ENCODE measurements at regions of chr16 and their contacts with region 1.

Region 1: GRCh38 chr16:18789850-18790724 is at the start of gene RPS15A:
- DNase-seq: peak; percentile 98
- H3K4me3 ChIP-seq: peak within 1 kb of the TSS; percentile 88
- H3K27ac ChIP-seq: peak within 1 kb of the TSS; percentile 94
- H3K4me1 ChIP-seq: peaks cover 30% of the 10 kb centered on the region
- H3K27me3 ChIP-seq: no peaks in the 10 kb centered on the region
- CTCF ChIP-seq: no peak
- total RNA-seq, gene RPS15A: 1,282 and 1,307 TPM in 2 replicates

Region 2: DNA sequence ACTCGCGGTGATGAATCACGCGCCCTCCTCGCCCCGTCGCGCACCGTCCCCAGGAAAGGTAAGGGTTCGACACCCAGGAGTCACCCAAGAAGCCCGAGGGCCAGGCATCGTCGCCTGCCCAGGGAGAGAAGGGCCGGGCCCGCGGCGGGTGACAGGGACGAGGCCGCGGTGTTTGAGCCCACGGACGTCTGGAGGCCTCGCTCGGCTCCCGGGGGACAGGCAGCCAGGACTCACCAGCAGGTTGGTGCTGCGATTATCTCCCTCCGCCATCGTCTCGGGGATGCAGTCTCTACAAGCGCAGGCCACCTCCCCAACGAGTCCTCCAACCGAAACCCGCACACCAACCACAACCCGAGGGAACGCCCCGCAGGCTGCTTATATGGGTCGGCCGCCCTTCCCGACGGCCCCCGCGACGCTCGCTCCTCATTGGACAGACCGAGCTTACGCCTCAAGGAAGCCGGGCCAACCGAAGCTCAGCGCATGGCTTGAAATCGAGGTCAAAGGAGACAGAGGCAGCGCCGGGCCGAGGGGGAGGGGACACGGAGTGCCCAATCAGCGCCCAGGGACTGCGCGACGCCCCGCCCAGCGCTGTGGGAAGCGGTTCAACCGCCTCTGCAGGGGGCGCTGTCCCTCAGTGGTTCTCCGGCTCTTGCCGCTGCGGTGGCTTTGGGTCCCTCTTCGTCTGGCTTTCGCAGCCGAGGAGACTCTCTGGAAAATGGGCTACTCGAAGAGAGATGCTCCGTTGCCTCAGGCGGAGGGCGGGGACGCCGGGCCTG is 11.3 kb after region 1 on chr16 and contains the start of gene ARL6IP1:
- CTCF ChIA-PET with region 1: interaction called, 3 read pairs
- POLR2A ChIA-PET with region 1: interaction called, 29 read pairs
- intact Hi-C with region 1: no loop called
- DNase-seq: peak; percentile 99
- H3K4me3 ChIP-seq: peak within 1 kb of the TSS; percentile 94
- H3K27ac ChIP-seq: peak within 1 kb of the TSS; percentile 95
- H3K4me1 ChIP-seq: peaks cover 51% of the 10 kb centered on the region
- H3K27me3 ChIP-seq: no peaks in the 10 kb centered on the region
- CTCF ChIP-seq: peak; percentile 94
- total RNA-seq, gene ARL6IP1: 179 and 223 TPM in 2 replicates

Region 3: DNA sequence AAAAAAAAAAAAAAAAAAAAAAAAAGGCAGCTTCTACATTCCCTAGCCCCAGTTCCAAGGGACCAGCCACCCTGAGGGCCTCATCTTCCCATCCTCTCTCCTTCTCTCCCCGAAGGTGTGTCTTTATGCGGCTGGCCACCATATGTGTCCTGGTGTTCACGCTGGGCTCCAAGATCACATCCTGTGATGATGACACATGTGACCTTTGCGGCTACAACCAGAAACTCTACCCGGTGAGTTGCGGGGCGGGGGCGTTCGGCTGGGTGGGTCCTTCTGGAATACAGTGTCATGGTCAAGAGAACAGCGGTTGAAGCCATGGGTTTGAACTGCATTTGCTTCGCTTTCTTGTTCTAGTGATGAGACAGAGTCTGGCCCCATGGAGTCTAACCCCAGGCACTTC is 254.7 kb after region 1 on chr16:
- CTCF ChIA-PET with region 1: no interaction called
- POLR2A ChIA-PET with region 1: no interaction called
- intact Hi-C with region 1: no loop called
- DNase-seq: no peak
- H3K4me3 ChIP-seq: no peak overlapping the region
- H3K27ac ChIP-seq: no peak overlapping the region
- H3K4me1 ChIP-seq: no peaks in the 10 kb centered on the region
- H3K27me3 ChIP-seq: no peaks in the 10 kb centered on the region
- CTCF ChIP-seq: no peak

Region 4: DNA sequence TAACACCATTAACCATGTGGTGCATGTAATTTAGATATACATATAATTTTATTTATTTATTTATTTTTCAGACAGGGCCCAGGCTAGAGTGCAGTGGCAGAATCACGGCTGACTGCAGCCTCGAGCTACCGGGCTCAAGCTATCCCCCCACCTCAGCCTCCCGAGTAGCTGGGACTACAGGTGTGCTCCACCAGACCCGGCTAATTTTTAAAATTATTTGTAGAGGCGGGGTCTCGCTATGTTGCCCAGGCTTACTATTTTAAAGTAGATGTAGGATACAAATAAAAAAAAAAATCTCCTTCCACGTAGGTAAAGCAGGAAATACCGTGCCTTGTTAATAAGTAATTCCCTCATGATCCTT is 276.9 kb after region 1 on chr16:
- CTCF ChIA-PET with region 1: no interaction called
- POLR2A ChIA-PET with region 1: no interaction called
- intact Hi-C with region 1: no loop called
- DNase-seq: no peak
- H3K4me3 ChIP-seq: peak overlapping the region; percentile 87
- H3K27ac ChIP-seq: peak overlapping the region; percentile 98
- H3K4me1 ChIP-seq: peaks cover 9% of the 10 kb centered on the region
- H3K27me3 ChIP-seq: no peaks in the 10 kb centered on the region
- CTCF ChIP-seq: no peak

Region 5: GRCh38 chr16:19521471-19522396 is 731.6 kb after region 1 on chr16 and contains the start of gene GDE1:
- CTCF ChIA-PET with region 1: no interaction called
- POLR2A ChIA-PET with region 1: no interaction called
- intact Hi-C with region 1: loop called (anchors 10 kb)
- DNase-seq: peak; percentile 95
- H3K4me3 ChIP-seq: peak within 1 kb of the TSS; percentile 75
- H3K27ac ChIP-seq: peak within 1 kb of the TSS; percentile 76
- H3K4me1 ChIP-seq: peaks cover 35% of the 10 kb centered on the region
- H3K27me3 ChIP-seq: no peaks in the 10 kb centered on the region
- CTCF ChIP-seq: peak; percentile 55; the same call in 1 of the 2 replicates
- total RNA-seq, gene GDE1: 63.5 and 64.2 TPM in 2 replicates